Transverse colon (tissue), 4 donors: ENCODE measurements at regions of chr17 and their contacts with region 1.

Region 1: DNA sequence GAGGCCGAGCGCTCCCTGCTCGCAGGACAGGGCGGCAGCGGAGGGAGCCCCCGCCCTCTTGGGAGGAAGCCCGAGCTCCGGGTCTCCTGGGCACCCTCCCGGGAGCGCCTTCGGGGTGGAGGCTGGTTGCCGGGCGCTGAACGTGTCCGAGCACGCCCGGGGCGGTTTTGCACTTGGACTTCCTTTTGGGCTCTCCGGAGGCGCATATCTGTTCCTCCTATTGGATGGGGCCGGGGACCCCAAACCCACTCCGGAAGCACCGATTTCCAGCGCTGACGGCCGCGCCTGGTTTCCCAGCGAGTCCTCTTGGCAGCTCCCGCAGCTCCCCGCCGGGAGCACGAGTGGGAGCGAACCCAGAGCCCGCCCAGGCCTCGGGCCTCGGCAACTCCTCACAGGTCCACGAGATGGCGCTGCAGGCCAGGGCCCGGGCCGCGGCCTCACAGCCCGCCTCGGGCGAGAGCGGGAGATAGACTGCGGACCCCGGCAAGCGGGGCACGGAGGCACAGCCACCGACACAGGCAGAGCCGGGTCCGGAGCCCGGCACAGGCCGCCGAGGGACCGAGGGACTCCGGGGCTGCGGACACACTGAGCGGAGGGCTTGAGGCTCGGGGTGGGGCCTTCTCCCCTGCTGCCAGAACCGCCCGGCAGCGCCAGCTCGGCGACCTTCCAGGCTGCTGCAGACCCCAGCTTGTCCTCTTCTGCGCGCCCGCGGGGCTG is 12.7 kb downstream of the TBX2 start:
- DNase-seq: peak; percentile 83
- H3K4me3 ChIP-seq: peak overlapping the region; percentile 39 to 57 (median 50)
- H3K27ac ChIP-seq: peak overlapping the region; percentile 59 to 77 (median 70)
- H3K4me1 ChIP-seq: peaks cover 13 to 50% (median 42%) of the 10 kb centered on the region in 4 donors
- H3K27me3 ChIP-seq: peaks cover 60% of the 10 kb centered on the region
- CTCF ChIP-seq: peak; percentile 97 to 99 (median 98)
- EP300 ChIP-seq: no peak
- POLR2A ChIP-seq: no peak

Region 2: GRCh38 chr17:60525685-60526514 is 886.4 kb before region 1 on chr17 and contains the start of gene APPBP2:
- in situ Hi-C with region 1: no loop called
- intact Hi-C with region 1: loop called (anchors 10 kb)
- DNase-seq: peak; percentile 88
- H3K4me3 ChIP-seq: peak within 1 kb of the TSS; percentile 75 to 99 (median 82)
- H3K27ac ChIP-seq: peak within 1 kb of the TSS; percentile 97 to 100 (median 98)
- H3K4me1 ChIP-seq: peaks cover 12 to 31% (median 19%) of the 10 kb centered on the region in 4 donors
- H3K27me3 ChIP-seq: no peaks in the 10 kb centered on the region
- CTCF ChIP-seq: peak in 1 of 5 experiments; percentile 15
- EP300 ChIP-seq: no peak
- POLR2A ChIP-seq: peak; percentile 89
- total RNA-seq, gene APPBP2: 10.1 to 24.8 (median 18.4) TPM

Region 3: DNA sequence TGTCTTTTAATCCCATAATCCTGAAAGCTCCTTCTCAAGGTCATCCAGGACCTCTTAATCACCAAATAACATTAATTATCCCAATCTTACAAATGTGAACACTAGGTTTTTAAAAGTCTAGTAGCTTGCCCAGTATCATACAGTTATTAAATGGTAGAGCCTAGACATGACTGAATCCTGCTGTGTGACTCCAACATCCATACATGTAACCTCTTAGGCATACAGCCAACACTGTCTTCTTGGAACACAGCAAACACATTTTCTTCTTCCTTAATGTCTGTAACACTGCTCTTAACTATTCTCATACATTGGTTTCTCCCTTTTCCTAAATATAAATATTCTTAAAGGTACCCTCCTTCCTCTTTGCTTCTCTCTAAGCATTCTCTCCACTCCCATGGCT is 437.4 kb after region 1 on chr17:
- in situ Hi-C with region 1: loop called in 1 of 4 experiments (anchors 25 kb)
- intact Hi-C with region 1: loop called (anchors 10 kb)
- DNase-seq: no peak
- H3K4me3 ChIP-seq: no peak overlapping the region
- H3K27ac ChIP-seq: no peak overlapping the region
- H3K4me1 ChIP-seq: no peaks in the 10 kb centered on the region
- H3K27me3 ChIP-seq: no peaks in the 10 kb centered on the region
- CTCF ChIP-seq: no peak
- EP300 ChIP-seq: no peak
- POLR2A ChIP-seq: no peak